ENCODE measurements at regions of chr12 and their contacts with region 1.

Region 1: GRCh38 chr12:29317556-29318363 is 63.2 kb downstream of the ERGIC2 start:
- DNase-seq: peak; percentile 69
- ATAC-seq: peak; percentile 100
- H3K4me3 Mint-ChIP-seq: no peak overlapping the region
- H3K27ac Mint-ChIP-seq: no peak overlapping the region
- H3K4me1 Mint-ChIP-seq: peaks cover 11% of the 10 kb centered on the region
- H3K27me3 Mint-ChIP-seq: no peaks in the 10 kb centered on the region

Region 2: GRCh38 chr12:29066011-29066588 is 251.7 kb before region 1 on chr12:
- CTCF ChIA-PET with region 1: interaction called, 40 read pairs
- DNase-seq: no peak
- ATAC-seq: no peak
- H3K4me3 Mint-ChIP-seq: no peak overlapping the region
- H3K27ac Mint-ChIP-seq: no peak overlapping the region
- H3K4me1 Mint-ChIP-seq: peaks cover 2% of the 10 kb centered on the region
- H3K27me3 Mint-ChIP-seq: peaks cover 36% of the 10 kb centered on the region

Region 3: GRCh38 chr12:29073628-29074239 is 244.0 kb before region 1 on chr12:
- CTCF ChIA-PET with region 1: interaction called, 40 read pairs
- DNase-seq: no peak
- ATAC-seq: peak; percentile 58
- H3K4me3 Mint-ChIP-seq: no peak overlapping the region
- H3K27ac Mint-ChIP-seq: no peak overlapping the region
- H3K4me1 Mint-ChIP-seq: no peaks in the 10 kb centered on the region
- H3K27me3 Mint-ChIP-seq: peaks cover 40% of the 10 kb centered on the region

Region 4: GRCh38 chr12:29088611-29089219 is 229.0 kb before region 1 on chr12:
- CTCF ChIA-PET with region 1: interaction called, 24 read pairs
- DNase-seq: no peak
- ATAC-seq: no peak
- H3K4me3 Mint-ChIP-seq: no peak overlapping the region
- H3K27ac Mint-ChIP-seq: no peak overlapping the region
- H3K4me1 Mint-ChIP-seq: no peaks in the 10 kb centered on the region
- H3K27me3 Mint-ChIP-seq: peaks cover 26% of the 10 kb centered on the region

Region 5: GRCh38 chr12:29486972-29487371 is 169.2 kb after region 1 on chr12:
- CTCF ChIA-PET with region 1: no interaction called
- DNase-seq: no peak
- ATAC-seq: no peak
- H3K4me3 Mint-ChIP-seq: no peak overlapping the region
- H3K27ac Mint-ChIP-seq: no peak overlapping the region
- H3K4me1 Mint-ChIP-seq: no peaks in the 10 kb centered on the region
- H3K27me3 Mint-ChIP-seq: peaks cover 23% of the 10 kb centered on the region

Measured in activated CD8-positive, alpha-beta memory T cell treated with anti-CD3 and anti-CD28 coated beads, Interleukin-2, amount 10 ng/mL, durations not matched to agents 7 days and 5 days (primary cell).